ENCODE measurements at regions of chr19 and their contacts with region 1.

Region 1: DNA sequence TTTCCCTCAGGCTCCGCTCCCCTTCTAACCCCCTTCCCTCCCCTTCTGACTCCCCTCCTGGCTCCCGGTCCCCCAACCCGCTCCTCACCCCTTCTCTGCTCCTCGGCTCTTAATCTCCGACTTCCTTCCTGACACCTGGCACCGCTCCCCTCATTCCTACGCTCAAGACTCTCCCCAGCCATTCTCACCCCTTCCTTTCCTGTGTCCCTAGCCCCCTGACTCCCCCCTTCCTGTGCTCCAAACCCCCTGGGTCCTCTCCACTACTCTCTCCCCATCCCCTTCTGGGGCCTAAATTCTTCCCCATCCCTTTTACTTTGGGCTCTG is 658 bp downstream of the CLPP start:
- DNase-seq: peak in 1 of 14 experiments; percentile 33
- ATAC-seq: peak; percentile 3
- H3K4me3 ChIP-seq: peak overlapping the region; percentile 86
- H3K4me3 Mint-ChIP-seq: peak overlapping the region; percentile 94
- H3K27ac ChIP-seq: peak overlapping the region; percentile 83
- H3K27ac Mint-ChIP-seq: peak overlapping the region; percentile 92
- H3K4me1 ChIP-seq: peaks cover 40% of the 10 kb centered on the region
- H3K4me1 Mint-ChIP-seq: peaks cover 27% of the 10 kb centered on the region
- H3K27me3 ChIP-seq: no peaks in the 10 kb centered on the region
- H3K27me3 Mint-ChIP-seq: no peaks in the 10 kb centered on the region
- CTCF ChIP-seq: no peak

Region 2: GRCh38 chr19:5767949-5768348 is 594.0 kb before region 1 on chr19:
- CTCF ChIA-PET with region 1: no interaction called
- POLR2A ChIA-PET with region 1: no interaction called
- intact Hi-C with region 1: no loop called
- DNase-seq: no peak
- ATAC-seq: no peak
- H3K4me3 ChIP-seq: no peak overlapping the region
- H3K4me3 Mint-ChIP-seq: no peak overlapping the region
- H3K27ac ChIP-seq: no peak overlapping the region
- H3K27ac Mint-ChIP-seq: no peak overlapping the region
- H3K4me1 ChIP-seq: no peaks in the 10 kb centered on the region
- H3K4me1 Mint-ChIP-seq: no peaks in the 10 kb centered on the region
- H3K27me3 ChIP-seq: no peaks in the 10 kb centered on the region
- H3K27me3 Mint-ChIP-seq: no peaks in the 10 kb centered on the region
- CTCF ChIP-seq: no peak

Region 3: GRCh38 chr19:5803752-5804515 is 558.1 kb before region 1 on chr19:
- CTCF ChIA-PET with region 1: interaction called, 3 read pairs
- POLR2A ChIA-PET with region 1: no interaction called
- intact Hi-C with region 1: loop called in 1 of 2 experiments (anchors 5 kb)
- DNase-seq: peak; percentile 86 to 97 (median 90)
- ATAC-seq: peak; percentile 97
- H3K4me3 ChIP-seq: peak overlapping the region; percentile 47
- H3K4me3 Mint-ChIP-seq: peak overlapping the region; percentile 83
- H3K27ac ChIP-seq: no peak overlapping the region
- H3K27ac Mint-ChIP-seq: peak overlapping the region; percentile 68
- H3K4me1 ChIP-seq: peaks cover 36% of the 10 kb centered on the region
- H3K4me1 Mint-ChIP-seq: peaks cover 18% of the 10 kb centered on the region
- H3K27me3 ChIP-seq: peaks cover 26 to 28% of the 10 kb centered on the region in 2 experiments
- H3K27me3 Mint-ChIP-seq: peaks cover 25% of the 10 kb centered on the region
- CTCF ChIP-seq: peak; percentile 81

Region 4: GRCh38 chr19:6312018-6312417 is 50.0 kb before region 1 on chr19:
- CTCF ChIA-PET with region 1: no interaction called
- POLR2A ChIA-PET with region 1: no interaction called
- intact Hi-C with region 1: no loop called
- DNase-seq: no peak
- ATAC-seq: no peak
- H3K4me3 ChIP-seq: no peak overlapping the region
- H3K4me3 Mint-ChIP-seq: no peak overlapping the region
- H3K27ac ChIP-seq: no peak overlapping the region
- H3K27ac Mint-ChIP-seq: no peak overlapping the region
- H3K4me1 ChIP-seq: no peaks in the 10 kb centered on the region
- H3K4me1 Mint-ChIP-seq: no peaks in the 10 kb centered on the region
- H3K27me3 ChIP-seq: no peaks in the 10 kb centered on the region
- H3K27me3 Mint-ChIP-seq: no peaks in the 10 kb centered on the region
- CTCF ChIP-seq: no peak

Region 5: GRCh38 chr19:6372594-6373095 is 10.7 kb after region 1 on chr19 and contains the start of gene ALKBH7:
- CTCF ChIA-PET with region 1: no interaction called
- POLR2A ChIA-PET with region 1: interaction called, 172 read pairs
- intact Hi-C with region 1: loop called (anchors 1 kb)
- DNase-seq: peak; percentile 89 to 100 (median 96)
- ATAC-seq: peak; percentile 75
- H3K4me3 ChIP-seq: peak within 1 kb of the TSS; percentile 66
- H3K4me3 Mint-ChIP-seq: peak within 1 kb of the TSS; percentile 96
- H3K27ac ChIP-seq: peak within 1 kb of the TSS; percentile 84 to 87
- H3K27ac Mint-ChIP-seq: peak within 1 kb of the TSS; percentile 89
- H3K4me1 ChIP-seq: peaks cover 18% of the 10 kb centered on the region
- H3K4me1 Mint-ChIP-seq: peaks cover 19% of the 10 kb centered on the region
- H3K27me3 ChIP-seq: no peaks in the 10 kb centered on the region
- H3K27me3 Mint-ChIP-seq: no peaks in the 10 kb centered on the region
- CTCF ChIP-seq: no peak
- total RNA-seq, gene ALKBH7: 75.3 to 78.7 TPM

Region 6: GRCh38 chr19:6424939-6425731 is 63.1 kb after region 1 on chr19:
- CTCF ChIA-PET with region 1: no interaction called
- POLR2A ChIA-PET with region 1: interaction called, 53 read pairs
- intact Hi-C with region 1: no loop called
- DNase-seq: peak; percentile 96 to 100 (median 98)
- ATAC-seq: peak; percentile 83
- H3K4me3 ChIP-seq: peak overlapping the region; percentile 46
- H3K4me3 Mint-ChIP-seq: peak overlapping the region; percentile 90
- H3K27ac ChIP-seq: peak overlapping the region; percentile 75 to 87
- H3K27ac Mint-ChIP-seq: peak overlapping the region; percentile 81
- H3K4me1 ChIP-seq: peaks cover 48% of the 10 kb centered on the region
- H3K4me1 Mint-ChIP-seq: peaks cover 37% of the 10 kb centered on the region
- H3K27me3 ChIP-seq: no peaks in the 10 kb centered on the region
- H3K27me3 Mint-ChIP-seq: no peaks in the 10 kb centered on the region
- CTCF ChIP-seq: no peak

Region 7: DNA sequence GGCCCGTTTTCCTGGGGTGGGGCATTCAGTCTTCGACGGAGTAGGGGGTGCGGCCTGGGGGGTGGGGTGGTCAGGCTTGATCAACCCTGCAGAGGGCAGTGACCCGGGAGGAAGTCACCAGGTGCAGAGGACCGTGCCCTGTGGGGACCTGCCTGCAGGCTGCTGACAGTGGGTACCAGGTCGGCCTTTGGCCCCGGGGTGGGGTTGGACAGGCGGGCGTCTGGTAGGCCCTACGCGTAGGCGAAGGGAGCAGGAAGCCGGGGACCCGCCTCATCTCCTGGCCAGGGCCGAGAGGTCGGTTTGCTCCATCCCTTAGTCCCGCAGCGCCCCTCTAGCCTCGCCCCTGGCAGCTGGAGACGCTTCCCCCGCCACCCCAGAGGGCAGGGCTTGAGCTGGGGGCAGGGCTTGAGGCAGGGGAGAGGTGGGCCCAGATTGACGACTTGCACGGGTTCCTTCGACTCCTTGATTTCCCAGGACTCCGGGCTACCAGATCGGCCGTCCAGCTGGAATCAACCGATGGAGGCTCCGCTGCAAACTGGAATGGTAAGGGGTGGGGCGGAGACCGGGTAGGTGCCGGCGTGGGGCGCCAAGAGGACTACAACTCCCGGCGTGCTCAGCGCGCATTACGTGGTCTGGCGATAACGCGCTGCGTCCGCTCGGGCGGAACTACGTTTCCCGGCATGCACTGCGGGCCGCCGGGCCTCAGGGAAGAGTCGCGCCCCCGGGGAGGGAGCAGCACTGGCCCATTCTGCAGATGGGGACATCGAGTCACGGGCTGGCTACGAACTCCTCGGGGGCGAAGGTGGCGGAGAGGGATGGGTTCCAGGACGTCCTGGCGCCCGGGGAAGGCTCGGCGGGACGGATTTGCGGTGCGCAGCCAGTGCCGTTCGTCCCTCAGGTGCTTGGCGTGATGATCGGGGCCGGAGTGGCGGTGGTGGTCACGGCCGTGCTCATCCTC is 1173.3 kb after region 1 on chr19 and contains the start of gene PNPLA6:
- CTCF ChIA-PET with region 1: no interaction called
- POLR2A ChIA-PET with region 1: no interaction called
- intact Hi-C with region 1: loop called in 1 of 2 experiments (anchors 2 kb)
- DNase-seq: peak; percentile 85 to 95 (median 90)
- ATAC-seq: peak; percentile 77
- H3K4me3 ChIP-seq: peak within 1 kb of the TSS; percentile 93
- H3K4me3 Mint-ChIP-seq: peak within 1 kb of the TSS; percentile 98
- H3K27ac ChIP-seq: peak within 1 kb of the TSS; percentile 67 to 79
- H3K27ac Mint-ChIP-seq: peak within 1 kb of the TSS; percentile 87
- H3K4me1 ChIP-seq: peaks cover 40% of the 10 kb centered on the region
- H3K4me1 Mint-ChIP-seq: peaks cover 29% of the 10 kb centered on the region
- H3K27me3 ChIP-seq: no peaks in the 10 kb centered on the region
- H3K27me3 Mint-ChIP-seq: no peaks in the 10 kb centered on the region
- CTCF ChIP-seq: no peak
- total RNA-seq, gene PNPLA6: 62.0 to 70.9 TPM

Measured in CD4-positive, alpha-beta T cell (primary cell).